Activated CD4-positive, alpha-beta T cell treated with anti-CD3 and anti-CD28 coated beads, Interleukin-2, amount 10 ng/mL, durations not matched to agents 24 days and 14 days (primary cell): ENCODE measurements at regions of chr6 and their contacts with region 1.

Region 1: GRCh38 chr6:12011276-12012076 is 636 bp upstream of the HIVEP1 start:
- DNase-seq: peak; percentile 97
- H3K4me3 Mint-ChIP-seq: peak overlapping the region; percentile 96
- H3K27ac Mint-ChIP-seq: peak overlapping the region; percentile 99
- H3K4me1 Mint-ChIP-seq: peaks cover 46% of the 10 kb centered on the region
- H3K27me3 Mint-ChIP-seq: no peaks in the 10 kb centered on the region

Region 2: DNA sequence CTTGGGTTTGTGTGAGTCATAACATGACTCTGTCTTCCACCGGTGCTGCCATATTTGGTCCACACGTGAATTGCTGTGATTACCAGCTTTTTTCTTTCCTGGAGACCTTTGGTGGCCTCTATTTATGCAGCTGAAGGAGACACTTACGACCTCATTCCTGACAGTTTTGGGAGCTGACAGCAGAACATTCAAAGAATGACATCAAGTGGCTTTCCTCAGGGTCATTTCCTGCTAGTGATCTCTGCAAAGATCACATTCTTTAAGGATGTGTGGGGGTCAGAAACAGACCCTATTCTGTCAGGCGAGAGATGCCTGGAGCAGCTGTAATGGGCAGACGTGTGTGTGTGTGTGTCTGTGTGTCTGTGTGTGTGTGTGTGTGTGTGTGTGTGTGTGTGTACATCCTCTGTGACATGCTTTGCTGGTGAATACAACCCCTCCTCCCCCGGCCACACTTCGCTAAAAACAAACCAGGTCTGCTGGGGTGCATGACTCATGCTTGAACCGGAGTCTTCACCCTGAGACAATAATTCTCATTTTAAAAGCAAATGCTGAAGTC is 358.4 kb before region 1 on chr6:
- intact Hi-C with region 1: loop called (anchors 1 kb)
- DNase-seq: peak; percentile 85
- H3K4me3 Mint-ChIP-seq: peak overlapping the region; percentile 3
- H3K27ac Mint-ChIP-seq: peak overlapping the region; percentile 52
- H3K4me1 Mint-ChIP-seq: peaks cover 13% of the 10 kb centered on the region
- H3K27me3 Mint-ChIP-seq: peaks cover 6% of the 10 kb centered on the region

Region 3: GRCh38 chr6:11732036-11732631 is 279.3 kb before region 1 on chr6:
- intact Hi-C with region 1: loop called (anchors 1 kb)
- DNase-seq: peak; percentile 76
- H3K4me3 Mint-ChIP-seq: peak overlapping the region; percentile 64
- H3K27ac Mint-ChIP-seq: peak overlapping the region; percentile 93
- H3K4me1 Mint-ChIP-seq: peaks cover 61% of the 10 kb centered on the region
- H3K27me3 Mint-ChIP-seq: no peaks in the 10 kb centered on the region

Region 4: DNA sequence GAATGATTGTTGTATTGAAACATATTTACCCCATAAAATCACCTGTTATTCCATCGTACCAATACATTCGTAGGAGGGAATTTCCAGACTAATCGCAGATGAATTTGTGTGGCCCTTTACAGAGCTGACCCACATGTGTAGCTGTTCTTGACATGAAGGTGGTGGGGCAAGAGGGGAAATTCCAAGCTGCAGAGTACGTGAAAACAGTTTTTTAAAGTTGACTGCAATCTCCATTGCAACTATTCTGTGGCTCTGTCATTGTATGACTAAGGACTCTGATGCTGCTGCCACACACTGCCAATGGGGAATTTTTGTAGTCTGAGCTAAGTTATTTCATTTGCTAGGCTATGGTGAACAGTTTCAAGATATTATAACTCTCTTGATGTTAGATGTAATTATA is 186.5 kb before region 1 on chr6:
- intact Hi-C with region 1: loop called (anchors 10 kb)
- DNase-seq: peak; percentile 62
- H3K4me3 Mint-ChIP-seq: no peak overlapping the region
- H3K27ac Mint-ChIP-seq: peak overlapping the region; percentile 80
- H3K4me1 Mint-ChIP-seq: peaks cover 8% of the 10 kb centered on the region
- H3K27me3 Mint-ChIP-seq: no peaks in the 10 kb centered on the region

Region 5: GRCh38 chr6:12051861-12052368 is 40.4 kb after region 1 on chr6:
- intact Hi-C with region 1: loop called (anchors 1 kb)
- DNase-seq: peak; percentile 93
- H3K4me3 Mint-ChIP-seq: peak overlapping the region; percentile 84
- H3K27ac Mint-ChIP-seq: peak overlapping the region; percentile 93
- H3K4me1 Mint-ChIP-seq: peaks cover 63% of the 10 kb centered on the region
- H3K27me3 Mint-ChIP-seq: no peaks in the 10 kb centered on the region

Region 6: DNA sequence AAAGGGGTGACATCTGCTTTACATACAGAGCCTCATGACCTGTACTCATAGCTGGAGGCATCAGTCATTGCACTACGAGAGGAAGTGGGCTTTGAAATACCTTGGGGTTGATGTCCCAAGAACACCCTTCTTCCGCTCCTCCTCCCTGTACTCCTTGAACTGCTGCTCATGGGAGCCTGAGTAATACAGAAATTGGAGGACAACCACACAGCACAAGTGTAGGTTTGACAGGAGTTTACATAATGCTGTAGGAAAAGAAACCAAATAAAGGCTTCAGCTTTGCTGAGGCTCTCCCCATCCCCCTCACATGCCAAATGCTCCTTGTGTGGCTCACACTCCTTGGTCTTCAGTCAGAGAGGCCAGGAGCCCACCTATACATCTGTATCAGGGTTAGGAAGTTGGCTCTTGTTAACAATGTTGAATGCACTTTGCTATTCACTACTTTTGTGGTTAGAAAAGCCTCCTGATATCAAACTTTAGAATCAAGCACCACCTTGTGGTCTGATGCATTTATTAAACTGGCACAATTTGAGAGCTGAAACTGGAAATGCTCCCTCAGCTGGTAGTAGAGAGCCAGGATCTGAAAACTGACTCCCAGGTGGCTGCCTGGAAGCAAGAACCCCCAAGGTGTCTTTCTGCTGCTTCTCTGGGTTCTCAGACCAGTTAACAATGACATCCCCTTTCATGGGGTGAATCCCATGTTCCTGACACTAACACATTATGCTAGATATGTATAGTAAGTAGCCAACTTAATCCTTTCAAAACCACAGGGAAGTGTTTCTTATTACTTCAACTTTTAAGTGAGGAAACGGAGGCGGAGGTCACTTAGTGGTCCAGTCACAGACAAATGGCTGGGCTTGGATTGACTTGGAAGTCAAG is 222.5 kb after region 1 on chr6:
- intact Hi-C with region 1: loop called (anchors 1 kb)
- DNase-seq: peak; percentile 82
- H3K4me3 Mint-ChIP-seq: peak overlapping the region; percentile 22
- H3K27ac Mint-ChIP-seq: peak overlapping the region; percentile 64
- H3K4me1 Mint-ChIP-seq: peaks cover 42% of the 10 kb centered on the region
- H3K27me3 Mint-ChIP-seq: peaks cover 1% of the 10 kb centered on the region